ENCODE measurements at regions of chr18 and their contacts with region 1.

Region 1: DNA sequence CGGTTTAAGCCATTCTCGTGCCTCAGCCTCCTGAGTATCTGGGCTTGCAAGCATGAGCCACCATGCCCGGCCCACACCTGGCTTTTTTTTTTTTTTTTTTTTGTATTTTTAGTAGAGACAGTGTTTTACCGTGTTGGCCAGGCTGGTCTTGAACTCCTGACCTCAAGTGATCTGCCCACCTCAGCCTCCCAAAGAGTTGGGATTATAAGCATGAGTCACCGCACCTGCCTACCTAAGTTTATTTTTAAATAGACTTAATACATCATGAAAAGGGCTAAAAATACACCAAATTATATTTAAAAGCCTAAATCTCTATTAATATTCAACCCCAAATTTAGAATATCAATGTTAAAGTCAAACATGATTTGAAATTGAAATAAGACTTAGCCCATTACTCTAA is 250.8 kb upstream of the MC4R start:
- DNase-seq: no peak
- H3K4me3 Mint-ChIP-seq: no peak overlapping the region
- H3K27ac Mint-ChIP-seq: no peak overlapping the region
- H3K4me1 Mint-ChIP-seq: no peaks in the 10 kb centered on the region
- H3K27me3 Mint-ChIP-seq: no peaks in the 10 kb centered on the region
- CTCF ChIP-seq: no peak

Region 2: GRCh38 chr18:60568220-60568619 is 55.1 kb before region 1 on chr18:
- CTCF ChIA-PET with region 1: interaction called, 10 read pairs
- intact Hi-C with region 1: no loop called
- DNase-seq: no peak
- H3K4me3 Mint-ChIP-seq: no peak overlapping the region
- H3K27ac Mint-ChIP-seq: no peak overlapping the region
- H3K4me1 Mint-ChIP-seq: no peaks in the 10 kb centered on the region
- H3K27me3 Mint-ChIP-seq: no peaks in the 10 kb centered on the region
- CTCF ChIP-seq: no peak

Region 3: GRCh38 chr18:60601249-60601648 is 22.1 kb before region 1 on chr18:
- CTCF ChIA-PET with region 1: no interaction called
- intact Hi-C with region 1: no loop called
- DNase-seq: no peak
- H3K4me3 Mint-ChIP-seq: no peak overlapping the region
- H3K27ac Mint-ChIP-seq: no peak overlapping the region
- H3K4me1 Mint-ChIP-seq: no peaks in the 10 kb centered on the region
- H3K27me3 Mint-ChIP-seq: no peaks in the 10 kb centered on the region
- CTCF ChIP-seq: no peak

Region 4: DNA sequence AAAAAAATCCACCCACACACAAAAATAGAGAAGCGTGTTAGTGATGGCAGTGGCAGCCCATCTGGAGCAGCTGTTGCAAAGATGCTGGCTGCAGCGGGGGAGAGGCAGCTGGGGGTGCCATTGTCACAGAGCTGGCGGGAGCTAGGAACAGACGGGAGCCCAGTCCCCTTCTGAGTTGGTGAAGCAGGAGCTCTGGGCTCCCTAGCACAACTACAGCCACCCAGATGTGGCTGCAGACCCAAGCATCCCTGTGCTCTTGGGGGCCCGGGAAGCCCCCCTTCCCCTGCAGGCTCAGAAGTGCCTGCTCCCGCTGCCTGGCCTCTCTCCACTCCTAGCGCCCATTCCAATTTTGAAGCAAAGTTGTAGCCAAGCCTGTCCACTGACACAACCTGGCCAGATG is 115.9 kb after region 1 on chr18:
- CTCF ChIA-PET with region 1: no interaction called
- intact Hi-C with region 1: no loop called
- DNase-seq: no peak
- H3K4me3 Mint-ChIP-seq: no peak overlapping the region
- H3K27ac Mint-ChIP-seq: no peak overlapping the region
- H3K4me1 Mint-ChIP-seq: no peaks in the 10 kb centered on the region
- H3K27me3 Mint-ChIP-seq: no peaks in the 10 kb centered on the region
- CTCF ChIP-seq: no peak

Measured in Calu3 (cell line).